Caco-2 (cell line): ENCODE measurements at regions of chr14 and their contacts with region 1.

Region 1: DNA sequence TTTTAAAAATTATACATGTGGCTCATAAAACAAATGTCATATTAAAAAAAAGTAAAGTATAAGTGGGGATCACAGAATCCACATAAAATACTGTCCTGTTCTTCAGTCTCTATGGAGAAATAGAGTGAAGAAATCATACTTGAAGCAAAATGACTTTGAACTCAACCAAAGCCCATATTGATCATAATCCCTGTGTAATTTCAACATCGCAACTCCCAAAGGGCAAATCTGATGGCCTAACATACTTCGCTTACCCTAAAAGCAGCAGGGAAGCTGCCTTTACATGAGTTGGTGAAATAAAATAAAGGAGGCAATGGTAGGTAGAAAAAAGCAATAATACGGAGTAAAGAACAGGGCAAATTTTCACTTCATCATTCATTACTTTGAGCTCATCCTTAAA is 101.8 kb downstream of the CEP128 start:
- DNase-seq: no peak
- H3K4me3 ChIP-seq: no peak overlapping the region
- H3K4me3 Mint-ChIP-seq: no peak overlapping the region
- H3K27ac Mint-ChIP-seq: no peak overlapping the region
- H3K4me1 ChIP-seq: peaks cover 14% of the 10 kb centered on the region
- H3K4me1 Mint-ChIP-seq: peaks cover 10% of the 10 kb centered on the region
- H3K27me3 ChIP-seq: no peaks in the 10 kb centered on the region
- H3K27me3 Mint-ChIP-seq: no peaks in the 10 kb centered on the region
- CTCF ChIP-seq: no peak

Region 2: DNA sequence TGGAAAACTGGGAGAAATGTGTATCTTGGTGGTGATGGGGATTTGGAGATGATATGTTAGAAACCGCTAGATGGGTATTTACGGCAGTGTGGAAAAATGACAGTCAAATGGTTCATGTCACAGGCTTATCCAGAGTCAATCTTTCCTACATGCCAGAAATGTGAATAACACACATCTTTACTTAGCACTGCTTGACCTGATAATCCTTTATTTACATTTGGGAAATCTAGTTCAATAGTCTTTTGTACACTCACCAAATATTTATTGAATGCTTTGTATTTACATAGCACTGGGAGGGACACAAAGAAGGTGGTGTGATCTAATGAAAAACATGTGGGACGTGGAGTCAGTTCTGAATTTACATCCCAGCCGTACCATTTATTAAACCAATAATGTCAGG is 836.6 kb before region 1 on chr14:
- CTCF ChIA-PET with region 1: no interaction called
- POLR2A ChIA-PET with region 1: no interaction called
- intact Hi-C with region 1: loop called (anchors 1 kb)
- DNase-seq: peak in 1 of 2 experiments; percentile 25
- H3K4me3 ChIP-seq: no peak overlapping the region
- H3K4me3 Mint-ChIP-seq: no peak overlapping the region
- H3K27ac Mint-ChIP-seq: no peak overlapping the region
- H3K4me1 ChIP-seq: peaks cover 11% of the 10 kb centered on the region
- H3K4me1 Mint-ChIP-seq: peaks cover 12% of the 10 kb centered on the region
- H3K27me3 ChIP-seq: no peaks in the 10 kb centered on the region
- H3K27me3 Mint-ChIP-seq: no peaks in the 10 kb centered on the region
- CTCF ChIP-seq: no peak

Region 3: GRCh38 chr14:80754696-80755095 is 85.0 kb before region 1 on chr14:
- CTCF ChIA-PET with region 1: no interaction called
- POLR2A ChIA-PET with region 1: no interaction called
- intact Hi-C with region 1: no loop called
- DNase-seq: no peak
- H3K4me3 ChIP-seq: no peak overlapping the region
- H3K4me3 Mint-ChIP-seq: no peak overlapping the region
- H3K27ac Mint-ChIP-seq: no peak overlapping the region
- H3K4me1 ChIP-seq: no peaks in the 10 kb centered on the region
- H3K4me1 Mint-ChIP-seq: peaks cover 7% of the 10 kb centered on the region
- H3K27me3 ChIP-seq: no peaks in the 10 kb centered on the region
- H3K27me3 Mint-ChIP-seq: no peaks in the 10 kb centered on the region
- CTCF ChIP-seq: no peak